Caco-2 (cell line): ENCODE measurements at regions of chr1 and their contacts with region 1.

Region 1: DNA sequence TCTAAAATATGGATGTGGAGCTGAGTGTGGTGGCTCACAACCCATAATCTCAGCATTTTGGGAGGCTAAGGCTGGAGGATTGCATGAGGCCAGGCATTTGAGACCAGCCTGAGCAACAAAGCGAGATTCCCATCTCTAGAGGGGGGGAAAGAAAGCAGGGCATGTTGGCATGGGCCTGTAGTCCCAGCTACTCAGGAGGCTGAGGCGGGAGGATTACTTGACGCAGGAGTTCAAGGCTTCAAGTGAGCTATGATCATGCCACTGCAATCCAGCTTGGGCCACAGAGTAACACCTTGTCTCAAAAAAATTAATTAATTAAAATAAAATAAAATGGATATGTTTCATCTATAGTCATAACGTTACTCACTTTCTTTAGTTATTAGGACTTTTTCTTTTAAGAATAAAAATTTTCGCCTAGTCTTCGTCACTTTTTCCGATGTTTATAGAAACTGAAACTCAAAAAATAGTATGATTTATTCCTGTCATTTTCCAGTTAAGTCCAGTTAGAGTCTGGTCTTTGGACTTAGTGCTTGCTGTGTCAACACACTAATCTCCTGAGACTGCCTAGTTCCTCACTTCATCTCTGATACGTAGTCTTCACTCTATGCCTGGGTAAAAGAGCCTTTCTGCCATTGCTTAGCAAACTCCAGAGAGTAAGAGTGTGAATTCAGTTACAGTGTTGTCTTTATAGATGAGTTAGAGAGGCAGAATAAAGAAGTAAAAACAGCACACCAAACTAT is 28.0 kb downstream of the IARS2 start:
- DNase-seq: peak; percentile 62 to 66
- H3K4me3 ChIP-seq: 0 out of 2 replicates have a peak overlapping the region, but pooled peaks have one; percentile 13
- H3K4me3 Mint-ChIP-seq: peak overlapping the region; percentile 73
- H3K27ac Mint-ChIP-seq: peak overlapping the region; percentile 90
- H3K4me1 ChIP-seq: peaks cover 57% of the 10 kb centered on the region
- H3K4me1 Mint-ChIP-seq: peaks cover 27% of the 10 kb centered on the region
- H3K27me3 ChIP-seq: no peaks in the 10 kb centered on the region
- H3K27me3 Mint-ChIP-seq: no peaks in the 10 kb centered on the region
- CTCF ChIP-seq: no peak

Region 2: GRCh38 chr1:220046052-220046930 is 75.7 kb before region 1 on chr1 and contains the start of gene EPRS1:
- CTCF ChIA-PET with region 1: no interaction called
- POLR2A ChIA-PET with region 1: interaction called, 18 read pairs
- intact Hi-C with region 1: loop called (anchors 2 kb)
- DNase-seq: peak; percentile 96 to 97
- H3K4me3 ChIP-seq: peak within 1 kb of the TSS; percentile 95
- H3K4me3 Mint-ChIP-seq: peak within 1 kb of the TSS; percentile 89
- H3K27ac Mint-ChIP-seq: peak within 1 kb of the TSS; percentile 95
- H3K4me1 ChIP-seq: peaks cover 14% of the 10 kb centered on the region
- H3K4me1 Mint-ChIP-seq: peaks cover 8% of the 10 kb centered on the region
- H3K27me3 ChIP-seq: no peaks in the 10 kb centered on the region
- H3K27me3 Mint-ChIP-seq: no peaks in the 10 kb centered on the region
- CTCF ChIP-seq: peak; percentile 67 to 81
- total RNA-seq, gene EPRS1: 199 and 215 TPM in 2 replicates

Region 3: DNA sequence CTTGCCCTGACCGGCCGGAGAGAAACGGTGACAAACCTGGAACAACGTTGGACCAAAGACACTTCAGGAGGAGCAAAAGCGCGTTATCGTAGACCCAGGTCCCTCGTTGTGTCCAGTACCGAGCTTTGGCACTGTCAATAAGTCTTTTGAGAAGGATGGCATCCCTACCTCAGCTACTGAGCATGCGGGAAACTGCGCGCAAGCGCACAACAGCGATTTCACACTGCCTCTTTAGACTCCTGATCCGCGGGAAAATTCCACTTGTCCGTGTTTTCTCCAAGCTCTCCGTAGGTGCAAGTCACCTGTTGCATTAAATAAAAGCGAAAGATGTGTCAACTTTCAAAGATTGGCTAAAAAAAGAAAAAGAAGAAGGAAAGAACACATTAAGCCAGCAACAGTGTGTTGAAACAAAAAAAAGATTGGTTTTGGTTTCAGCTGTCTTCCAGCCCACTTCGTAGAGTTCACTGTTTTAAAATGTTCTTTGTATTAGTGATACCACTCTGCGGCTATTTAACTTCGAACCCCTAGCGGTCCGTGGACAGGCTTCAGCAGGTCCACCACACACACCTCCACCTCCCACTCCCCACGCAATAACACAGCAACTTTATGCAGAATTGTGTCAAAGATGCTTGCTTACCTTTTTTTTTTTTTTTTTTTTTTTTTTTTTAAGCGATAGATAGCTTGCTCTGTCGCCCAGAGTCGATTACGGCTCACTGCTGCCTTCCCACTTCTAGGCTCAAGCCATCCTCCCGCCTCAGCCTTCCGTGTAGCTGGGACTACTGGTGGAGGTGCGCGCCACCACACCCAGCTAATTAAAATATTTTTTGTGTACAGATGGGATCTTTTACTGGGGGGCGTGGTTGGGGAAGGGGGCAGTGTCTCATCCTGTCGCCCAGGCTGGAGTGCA is 32.1 kb before region 1 on chr1 and contains the start of gene BPNT1:
- CTCF ChIA-PET with region 1: no interaction called
- POLR2A ChIA-PET with region 1: no interaction called
- intact Hi-C with region 1: loop called (anchors 1 kb)
- DNase-seq: peak; percentile 96 to 97
- H3K4me3 ChIP-seq: peak within 1 kb of the TSS; percentile 69
- H3K4me3 Mint-ChIP-seq: peak within 1 kb of the TSS; percentile 100
- H3K27ac Mint-ChIP-seq: peak within 1 kb of the TSS; percentile 94
- H3K4me1 ChIP-seq: 0 out of 2 replicates have a peak, but pooled peaks cover 5% of the 10 kb centered on the region
- H3K4me1 Mint-ChIP-seq: no peaks in the 10 kb centered on the region
- H3K27me3 ChIP-seq: no peaks in the 10 kb centered on the region
- H3K27me3 Mint-ChIP-seq: no peaks in the 10 kb centered on the region
- CTCF ChIP-seq: no peak
- total RNA-seq, gene BPNT1: 25.0 and 29.4 TPM in 2 replicates